Activated naive CD4-positive, alpha-beta T cell treated with anti-CD3 and anti-CD28 coated beads for 36 hours (primary cell): ENCODE measurements at regions of chr11 and their contacts with region 1.

Region 1: GRCh38 chr11:45859661-45860140 is 12.4 kb downstream of the CRY2 start:
- DNase-seq: no peak
- H3K4me3 Mint-ChIP-seq: no peak overlapping the region
- H3K27ac Mint-ChIP-seq: no peak overlapping the region
- H3K4me1 Mint-ChIP-seq: peaks cover 2% of the 10 kb centered on the region
- H3K27me3 Mint-ChIP-seq: no peaks in the 10 kb centered on the region

Region 2: GRCh38 chr11:45872513-45873356 is 13.0 kb after region 1 on chr11:
- CTCF ChIA-PET with region 1: interaction called, 29 read pairs
- intact Hi-C with region 1: no loop called
- DNase-seq: peak; percentile 55
- H3K4me3 Mint-ChIP-seq: no peak overlapping the region
- H3K27ac Mint-ChIP-seq: no peak overlapping the region
- H3K4me1 Mint-ChIP-seq: no peaks in the 10 kb centered on the region
- H3K27me3 Mint-ChIP-seq: no peaks in the 10 kb centered on the region